ENCODE measurements at regions of chr5 and their contacts with region 1.

Region 1: DNA sequence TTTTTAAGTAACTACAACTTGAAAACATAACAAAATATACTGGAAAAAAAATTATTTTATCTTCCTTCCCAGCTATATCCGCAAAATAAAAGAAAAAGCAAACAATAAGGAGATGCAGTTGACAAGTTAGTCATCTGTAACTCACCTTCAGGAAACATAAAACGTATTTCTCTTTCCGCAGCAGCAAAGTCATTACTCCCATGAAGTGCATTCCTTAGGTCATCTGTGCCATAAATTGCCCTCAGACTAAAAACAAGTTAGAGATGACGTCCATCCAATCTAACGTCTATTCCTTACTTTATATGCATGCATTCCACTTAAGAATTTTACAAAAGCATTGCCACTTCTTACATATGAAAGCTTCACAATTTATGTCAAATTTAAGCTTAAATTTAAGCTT is 10.9 kb downstream of the NME5 start:
- DNase-seq: no peak
- ATAC-seq: no peak
- H3K4me3 ChIP-seq: no peak overlapping the region
- H3K27ac ChIP-seq: no peak overlapping the region
- H3K4me1 ChIP-seq: no peaks in the 10 kb centered on the region
- H3K27me3 ChIP-seq: peaks cover 7 to 8% of the 10 kb centered on the region in 2 experiments; a peak in 2 of 5 replicates
- CTCF ChIP-seq: no peak
- EP300 ChIP-seq: no peak
- POLR2A ChIP-seq: no peak
- RAD21 ChIP-seq: no peak

Region 2: GRCh38 chr5:137629646-137630045 is 498.7 kb before region 1 on chr5:
- CTCF ChIA-PET with region 1: interaction called, 22 read pairs
- POLR2A ChIA-PET with region 1: interaction called, 5 read pairs
- in situ Hi-C with region 1: no loop called
- intact Hi-C with region 1: loop called (anchors 2 kb)
- DNase-seq: peak; percentile 62 to 69 (median 64)
- ATAC-seq: peak; percentile 95
- H3K4me3 ChIP-seq: no peak overlapping the region
- H3K27ac ChIP-seq: no peak overlapping the region
- H3K4me1 ChIP-seq: no peaks in the 10 kb centered on the region
- H3K27me3 ChIP-seq: peaks cover 2 to 22% of the 10 kb centered on the region in 2 experiments; a peak in 4 of 5 replicates
- CTCF ChIP-seq: peak; percentile 75 to 90 (median 77)
- EP300 ChIP-seq: no peak
- POLR2A ChIP-seq: no peak
- RAD21 ChIP-seq: peak; percentile 83 to 93

Region 3: DNA sequence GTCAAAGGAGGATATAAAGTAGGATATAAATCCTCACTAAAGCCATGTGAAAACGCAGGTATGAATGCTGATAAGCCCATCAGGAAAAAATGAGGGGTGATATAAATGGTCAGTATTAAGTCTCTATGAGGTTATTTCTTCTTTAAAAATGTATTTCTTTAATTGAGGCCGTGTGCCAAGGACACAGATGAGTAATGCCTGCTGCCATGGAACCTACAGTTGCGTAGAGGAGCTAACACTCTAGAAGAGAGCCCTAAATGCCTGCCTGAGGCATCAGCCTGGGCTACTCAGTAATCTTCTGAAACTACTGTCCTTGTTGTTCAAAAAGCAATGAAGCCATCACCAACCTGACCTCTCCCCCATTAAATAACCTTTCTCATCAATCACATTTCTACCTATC is 477.3 kb before region 1 on chr5:
- CTCF ChIA-PET with region 1: no interaction called
- POLR2A ChIA-PET with region 1: no interaction called
- in situ Hi-C with region 1: loop called (anchors 10 kb)
- intact Hi-C with region 1: loop called (anchors 5 kb)
- DNase-seq: no peak
- ATAC-seq: no peak
- H3K4me3 ChIP-seq: no peak overlapping the region
- H3K27ac ChIP-seq: no peak overlapping the region
- H3K4me1 ChIP-seq: no peaks in the 10 kb centered on the region
- H3K27me3 ChIP-seq: no peaks in the 10 kb centered on the region
- CTCF ChIP-seq: no peak
- EP300 ChIP-seq: no peak
- POLR2A ChIP-seq: no peak
- RAD21 ChIP-seq: no peak

Region 4: DNA sequence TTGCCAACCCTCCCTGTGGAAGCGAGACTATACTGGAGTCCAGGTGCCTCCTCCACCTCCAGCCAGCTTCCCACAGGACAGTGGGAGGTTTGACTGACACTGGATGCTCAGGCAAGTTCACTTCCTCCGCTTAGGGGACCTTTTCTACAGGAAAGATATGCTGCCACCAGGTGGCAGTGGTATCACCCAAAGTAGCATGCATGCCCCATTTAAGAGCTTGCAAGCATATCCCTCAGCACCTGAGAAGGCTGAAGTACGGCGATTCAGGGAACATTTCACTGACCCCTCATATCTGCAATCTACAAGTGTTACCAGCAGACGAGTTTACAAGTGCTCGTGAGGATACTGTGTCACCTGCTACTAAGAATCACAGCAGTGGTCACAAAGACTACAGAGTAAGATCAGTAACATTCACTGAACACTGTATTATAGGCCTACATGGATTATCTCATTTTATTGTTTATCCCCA is 468.0 kb before region 1 on chr5:
- CTCF ChIA-PET with region 1: interaction called, 10 read pairs
- POLR2A ChIA-PET with region 1: interaction called, 3 read pairs
- in situ Hi-C with region 1: loop called (anchors 10 kb)
- intact Hi-C with region 1: no loop called
- DNase-seq: peak; percentile 43 to 74 (median 52)
- ATAC-seq: peak; percentile 96
- H3K4me3 ChIP-seq: no peak overlapping the region
- H3K27ac ChIP-seq: no peak overlapping the region
- H3K4me1 ChIP-seq: no peaks in the 10 kb centered on the region
- H3K27me3 ChIP-seq: peaks cover 0 to 2% of the 10 kb centered on the region in 2 experiments; a peak in 1 of 5 replicates
- CTCF ChIP-seq: peak; percentile 70 to 83 (median 80)
- EP300 ChIP-seq: no peak
- POLR2A ChIP-seq: no peak
- RAD21 ChIP-seq: peak; percentile 79 to 85

Region 5: GRCh38 chr5:137867664-137868063 is 260.7 kb before region 1 on chr5 and contains the start of gene MYOT:
- CTCF ChIA-PET with region 1: no interaction called
- POLR2A ChIA-PET with region 1: no interaction called
- in situ Hi-C with region 1: no loop called
- intact Hi-C with region 1: no loop called
- DNase-seq: no peak
- ATAC-seq: no peak
- H3K4me3 ChIP-seq: no peak within 1 kb of the TSS
- H3K27ac ChIP-seq: no peak within 1 kb of the TSS
- H3K4me1 ChIP-seq: no peaks in the 10 kb centered on the region
- H3K27me3 ChIP-seq: peaks cover 2 to 7% of the 10 kb centered on the region in 2 experiments
- CTCF ChIP-seq: no peak
- EP300 ChIP-seq: no peak
- POLR2A ChIP-seq: no peak
- RAD21 ChIP-seq: no peak
- polyA plus RNA-seq, gene MYOT: 0.24 to 0.38 TPM

Region 6: GRCh38 chr5:138077065-138077696 is 51.2 kb before region 1 on chr5:
- CTCF ChIA-PET with region 1: interaction called, 32 read pairs
- POLR2A ChIA-PET with region 1: no interaction called
- in situ Hi-C with region 1: no loop called
- intact Hi-C with region 1: loop called (anchors 1 kb)
- DNase-seq: peak; percentile 56 to 73 (median 62)
- ATAC-seq: peak; percentile 83
- H3K4me3 ChIP-seq: no peak overlapping the region
- H3K27ac ChIP-seq: no peak overlapping the region
- H3K4me1 ChIP-seq: no peaks in the 10 kb centered on the region; a peak in 1 of 5 replicates
- H3K27me3 ChIP-seq: no peaks in the 10 kb centered on the region; a peak in 1 of 5 replicates
- CTCF ChIP-seq: peak; percentile 79 to 93 (median 80)
- EP300 ChIP-seq: no peak
- POLR2A ChIP-seq: no peak
- RAD21 ChIP-seq: peak; percentile 78 to 93

Region 7: GRCh38 chr5:138331449-138332368 is 203.4 kb after region 1 on chr5 and contains the start of gene CDC25C:
- CTCF ChIA-PET with region 1: no interaction called
- POLR2A ChIA-PET with region 1: no interaction called
- in situ Hi-C with region 1: no loop called
- intact Hi-C with region 1: no loop called
- DNase-seq: peak; percentile 95 to 99 (median 96)
- ATAC-seq: peak; percentile 99
- H3K4me3 ChIP-seq: peak within 1 kb of the TSS; percentile 64
- H3K27ac ChIP-seq: peak within 1 kb of the TSS; percentile 89
- H3K4me1 ChIP-seq: peaks cover 4 to 15% of the 10 kb centered on the region in 2 experiments; a peak in 4 of 5 replicates
- H3K27me3 ChIP-seq: no peaks in the 10 kb centered on the region
- CTCF ChIP-seq: no peak
- EP300 ChIP-seq: peak; percentile 36
- POLR2A ChIP-seq: peak; percentile 95
- RAD21 ChIP-seq: 0 out of 4 replicates have a peak, but pooled peaks of 1 of the 2 experiments have one; percentile 2
- polyA plus RNA-seq, gene CDC25C: 32.2 to 50.4 TPM

Measured in K562 (cell line).